GM12878 (cell line): ENCODE measurements at regions of chr2 and their contacts with region 1.

Region 1: DNA sequence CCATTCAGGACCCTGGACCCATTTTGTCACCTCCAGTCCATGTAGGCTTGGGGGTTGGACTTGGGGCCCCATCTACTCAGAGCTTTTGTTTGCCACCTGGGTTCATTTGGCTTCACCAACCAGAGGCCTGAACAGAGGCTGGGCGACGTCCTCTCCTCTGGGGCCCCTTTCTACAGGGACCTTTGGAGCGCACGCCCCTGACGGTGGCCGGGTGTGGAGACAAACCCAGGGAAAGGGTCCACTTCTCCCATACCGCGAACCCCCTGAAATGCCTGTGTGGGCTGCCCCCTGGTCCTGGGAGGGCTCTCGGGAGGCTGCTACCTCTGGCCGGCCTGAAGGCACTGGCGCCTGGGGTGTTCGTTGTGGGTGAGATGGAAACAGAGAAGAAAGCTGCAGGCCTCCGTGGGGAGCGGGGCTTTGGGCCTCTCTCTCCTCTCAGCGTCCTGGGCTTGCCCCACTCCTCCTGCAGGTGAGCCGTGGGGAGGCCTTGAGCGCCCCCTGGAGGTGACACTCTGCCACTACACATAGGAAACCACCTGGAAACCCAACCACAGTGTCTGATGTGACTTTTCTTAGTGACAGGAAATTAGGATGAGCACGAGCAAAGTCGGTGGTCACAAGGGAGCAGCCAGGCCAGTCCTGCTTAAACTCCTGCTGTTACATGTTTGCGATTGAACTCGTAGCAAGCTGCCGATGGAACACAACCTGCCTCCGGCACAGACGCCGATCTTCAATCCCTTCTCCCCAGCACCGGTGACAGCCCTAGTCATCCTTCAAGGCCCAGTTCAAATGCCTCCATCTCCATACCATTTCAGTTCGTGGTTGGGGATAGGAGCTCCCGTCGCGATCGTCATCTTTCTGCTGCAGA is 12.0 kb upstream of the NTSR2 start:
- DNase-seq: no peak
- ATAC-seq: peak; percentile 88
- H3K4me3 ChIP-seq: no peak overlapping the region
- H3K27ac ChIP-seq: no peak overlapping the region
- H3K4me1 ChIP-seq: no peaks in the 10 kb centered on the region
- H3K27me3 ChIP-seq: peaks cover 5 to 12% of the 10 kb centered on the region in 2 experiments; a peak in 3 of 4 replicates
- CTCF ChIP-seq: peak; percentile 61 to 91 (median 86)
- EP300 ChIP-seq: no peak
- POLR2A ChIP-seq: no peak
- RAD21 ChIP-seq: peak; percentile 58

Region 2: GRCh38 chr2:11477994-11478393 is 204.0 kb before region 1 on chr2:
- CTCF ChIA-PET with region 1: interaction called, 6 read pairs
- POLR2A ChIA-PET with region 1: no interaction called
- RAD21 ChIA-PET with region 1: no interaction called
- SMC1A ChIA-PET with region 1: interaction called, 3 read pairs
- in situ Hi-C with region 1: no loop called
- intact Hi-C with region 1: loop called (anchors 2 kb)
- DNase-seq: no peak
- ATAC-seq: peak; percentile 88
- H3K4me3 ChIP-seq: no peak overlapping the region
- H3K27ac ChIP-seq: no peak overlapping the region
- H3K4me1 ChIP-seq: no peaks in the 10 kb centered on the region
- H3K27me3 ChIP-seq: peaks cover 5 to 6% of the 10 kb centered on the region in 2 experiments; a peak in 3 of 4 replicates
- CTCF ChIP-seq: peak; percentile 67 to 83 (median 75)
- EP300 ChIP-seq: no peak
- POLR2A ChIP-seq: no peak
- RAD21 ChIP-seq: peak; percentile 89